CD8-positive, alpha-beta T cell (primary cell): ENCODE measurements at regions of chr10 and their contacts with region 1.

Region 1: GRCh38 chr10:114024876-114025610 is 18.6 kb upstream of the ADRB1 start:
- DNase-seq: peak in 2 of 9 experiments; percentile 22 to 59
- ATAC-seq: peak; percentile 44
- H3K4me3 ChIP-seq: no peak overlapping the region
- H3K4me3 Mint-ChIP-seq: no peak overlapping the region
- H3K27ac ChIP-seq: no peak overlapping the region
- H3K27ac Mint-ChIP-seq: no peak overlapping the region
- H3K4me1 ChIP-seq: peaks cover 10% of the 10 kb centered on the region
- H3K4me1 Mint-ChIP-seq: peaks cover 12% of the 10 kb centered on the region
- H3K27me3 ChIP-seq: no peaks in the 10 kb centered on the region
- H3K27me3 Mint-ChIP-seq: peaks cover 31% of the 10 kb centered on the region
- CTCF ChIP-seq: no peak

Region 2: DNA sequence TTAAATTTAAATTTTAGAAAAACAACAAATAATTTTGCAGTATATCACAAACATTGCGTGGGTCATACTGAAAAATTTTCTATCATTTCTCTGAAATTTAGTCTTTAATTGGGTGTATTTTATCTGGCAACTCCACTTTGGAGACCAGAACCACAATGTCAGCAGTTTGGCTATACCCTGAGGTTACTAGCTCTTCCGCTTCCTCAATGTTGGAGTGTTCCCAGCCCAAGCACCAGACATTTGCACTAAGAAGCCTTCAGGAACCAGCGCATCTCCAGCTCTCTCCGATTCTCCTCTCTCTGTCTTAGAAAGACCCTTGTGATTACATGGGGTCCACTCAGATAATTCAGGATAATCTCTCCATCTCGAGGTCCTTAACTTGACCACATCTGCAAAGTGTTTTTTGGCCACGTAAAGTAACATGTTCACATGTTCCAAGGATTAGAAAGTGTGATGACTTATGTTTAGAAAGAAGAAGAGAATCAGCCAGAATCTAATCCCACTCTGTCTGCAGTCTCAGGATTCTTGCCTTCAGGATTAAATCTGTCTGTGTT is 24.5 kb before region 1 on chr10:
- CTCF ChIA-PET with region 1: no interaction called
- POLR2A ChIA-PET with region 1: no interaction called
- intact Hi-C with region 1: loop called in 1 of 2 experiments (anchors 1 kb)
- DNase-seq: no peak
- ATAC-seq: no peak
- H3K4me3 ChIP-seq: no peak overlapping the region
- H3K4me3 Mint-ChIP-seq: no peak overlapping the region
- H3K27ac ChIP-seq: no peak overlapping the region
- H3K27ac Mint-ChIP-seq: no peak overlapping the region
- H3K4me1 ChIP-seq: no peaks in the 10 kb centered on the region
- H3K4me1 Mint-ChIP-seq: peaks cover 8% of the 10 kb centered on the region
- H3K27me3 ChIP-seq: no peaks in the 10 kb centered on the region
- H3K27me3 Mint-ChIP-seq: peaks cover 15% of the 10 kb centered on the region
- CTCF ChIP-seq: no peak